ENCODE measurements at regions of chr1 and their contacts with region 1.

Region 1: GRCh38 chr1:39609618-39610331 is 29.7 kb downstream of the HEYL start:
- DNase-seq: peak; percentile 69
- H3K4me3 ChIP-seq: no peak overlapping the region
- H3K27ac ChIP-seq: no peak overlapping the region
- H3K4me1 ChIP-seq: no peaks in the 10 kb centered on the region
- H3K27me3 ChIP-seq: no peaks in the 10 kb centered on the region
- CTCF ChIP-seq: peak; percentile 94

Region 2: GRCh38 chr1:39354572-39354971 is 255.2 kb before region 1 on chr1:
- CTCF ChIA-PET with region 1: no interaction called
- POLR2A ChIA-PET with region 1: no interaction called
- intact Hi-C with region 1: no loop called
- DNase-seq: no peak
- H3K4me3 ChIP-seq: no peak overlapping the region
- H3K27ac ChIP-seq: no peak overlapping the region
- H3K4me1 ChIP-seq: no peaks in the 10 kb centered on the region
- H3K27me3 ChIP-seq: no peaks in the 10 kb centered on the region
- CTCF ChIP-seq: peak; percentile 35; the same call in 1 of the 2 replicates

Region 3: GRCh38 chr1:39391691-39392679 is 217.8 kb before region 1 on chr1:
- CTCF ChIA-PET with region 1: interaction called, 11 read pairs
- POLR2A ChIA-PET with region 1: no interaction called
- intact Hi-C with region 1: no loop called
- DNase-seq: peak; percentile 94
- H3K4me3 ChIP-seq: peak overlapping the region; percentile 6
- H3K27ac ChIP-seq: peak overlapping the region; percentile 85
- H3K4me1 ChIP-seq: peaks cover 60% of the 10 kb centered on the region
- H3K27me3 ChIP-seq: no peaks in the 10 kb centered on the region
- CTCF ChIP-seq: no peak

Region 4: GRCh38 chr1:39540504-39541031 is 69.2 kb before region 1 on chr1:
- CTCF ChIA-PET with region 1: no interaction called
- POLR2A ChIA-PET with region 1: no interaction called
- intact Hi-C with region 1: no loop called
- DNase-seq: no peak
- H3K4me3 ChIP-seq: no peak overlapping the region
- H3K27ac ChIP-seq: no peak overlapping the region
- H3K4me1 ChIP-seq: no peaks in the 10 kb centered on the region
- H3K27me3 ChIP-seq: no peaks in the 10 kb centered on the region
- CTCF ChIP-seq: no peak

Region 5: GRCh38 chr1:39653546-39654031 is 43.8 kb after region 1 on chr1:
- CTCF ChIA-PET with region 1: interaction called, 41 read pairs
- POLR2A ChIA-PET with region 1: no interaction called
- intact Hi-C with region 1: loop called (anchors 1 kb)
- DNase-seq: peak; percentile 83
- H3K4me3 ChIP-seq: no peak overlapping the region
- H3K27ac ChIP-seq: no peak overlapping the region
- H3K4me1 ChIP-seq: no peaks in the 10 kb centered on the region
- H3K27me3 ChIP-seq: no peaks in the 10 kb centered on the region
- CTCF ChIP-seq: peak; percentile 90

Region 6: DNA sequence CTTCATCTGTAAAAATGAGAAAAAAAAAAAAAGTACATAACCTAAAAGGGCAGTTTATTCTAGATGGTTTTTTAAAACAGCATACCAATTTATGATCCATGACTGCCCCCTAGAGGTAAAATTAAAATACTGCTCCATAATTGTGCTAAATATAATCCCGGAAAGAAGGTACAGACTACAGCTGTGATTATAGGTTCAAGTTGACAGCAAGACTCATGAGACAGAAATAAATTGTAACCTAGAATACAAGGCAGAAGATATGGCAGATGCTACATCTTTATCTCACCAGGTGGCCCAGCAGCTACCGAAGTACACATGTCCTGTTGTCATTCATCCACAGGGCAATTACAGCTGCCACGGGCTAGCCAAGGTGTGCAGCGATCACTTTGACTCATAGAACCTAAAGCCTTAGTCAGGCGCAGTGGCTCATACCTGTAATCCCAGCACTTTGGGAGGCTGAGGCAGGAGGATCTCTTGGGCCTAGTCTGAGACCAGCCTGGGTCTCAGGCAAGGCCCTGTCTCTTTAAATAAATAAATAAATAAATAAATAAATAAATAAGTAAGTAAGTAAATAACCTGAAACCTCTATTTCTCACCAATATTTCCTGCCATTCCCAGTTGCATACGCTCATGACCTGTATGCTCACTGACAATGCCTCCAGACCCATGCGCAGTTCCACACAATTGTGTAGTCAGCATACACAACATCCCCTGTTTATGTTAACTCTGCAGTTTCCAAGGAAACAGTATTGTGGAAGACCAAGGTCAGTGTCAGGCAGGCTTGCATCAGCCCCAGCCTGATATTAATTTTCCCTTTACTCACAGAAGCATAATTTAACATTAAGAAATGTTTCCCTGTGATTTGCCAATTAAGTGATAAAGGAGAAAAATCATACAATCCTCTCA is 110.6 kb after region 1 on chr1:
- CTCF ChIA-PET with region 1: interaction called, 3 read pairs
- POLR2A ChIA-PET with region 1: no interaction called
- intact Hi-C with region 1: loop called (anchors 2 kb)
- DNase-seq: peak; percentile 81
- H3K4me3 ChIP-seq: no peak overlapping the region
- H3K27ac ChIP-seq: no peak overlapping the region
- H3K4me1 ChIP-seq: no peaks in the 10 kb centered on the region
- H3K27me3 ChIP-seq: peaks cover 20% of the 10 kb centered on the region
- CTCF ChIP-seq: peak; percentile 79

Region 7: DNA sequence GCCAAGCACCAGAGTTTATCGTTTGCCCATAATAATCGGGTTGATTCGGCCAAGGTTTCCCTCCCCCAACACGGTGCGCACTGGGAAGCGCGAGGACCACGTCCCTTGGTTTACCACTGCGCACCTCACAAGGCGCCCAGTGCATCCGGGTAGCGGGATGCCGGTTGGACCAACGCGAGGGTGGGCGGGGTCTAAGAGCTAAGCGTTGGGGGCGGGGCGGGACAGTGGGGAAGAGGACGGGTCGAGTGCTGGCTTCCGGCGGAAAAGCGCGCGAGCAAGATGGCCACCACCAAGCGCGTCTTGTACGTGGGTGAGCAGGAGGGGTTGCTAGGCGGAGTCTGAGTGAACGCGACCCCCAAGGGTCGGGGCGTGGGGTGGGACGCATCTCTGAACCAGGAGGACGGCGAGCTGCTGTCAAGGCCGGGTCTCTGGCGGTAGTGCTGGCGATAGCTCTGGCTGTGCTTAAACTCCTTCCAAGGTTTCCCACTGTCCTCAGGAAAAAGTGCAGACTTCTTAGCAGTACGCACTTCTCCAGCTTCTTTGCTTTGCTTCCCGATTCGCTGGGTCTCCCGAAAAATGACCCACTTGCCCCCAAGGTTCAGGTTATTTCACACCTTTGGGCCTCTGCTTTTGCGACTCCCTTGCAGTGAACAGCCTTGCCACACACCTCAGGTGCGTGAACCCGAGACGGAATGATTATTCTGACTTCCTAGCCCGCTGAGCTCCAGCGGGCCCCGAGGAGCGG is 129.0 kb after region 1 on chr1 and contains the start of gene PPIE:
- CTCF ChIA-PET with region 1: interaction called, 7 read pairs
- POLR2A ChIA-PET with region 1: interaction called, 14 read pairs
- intact Hi-C with region 1: no loop called
- DNase-seq: peak; percentile 97
- H3K4me3 ChIP-seq: peak within 1 kb of the TSS; percentile 83
- H3K27ac ChIP-seq: peak within 1 kb of the TSS; percentile 82
- H3K4me1 ChIP-seq: peaks cover 9% of the 10 kb centered on the region
- H3K27me3 ChIP-seq: no peaks in the 10 kb centered on the region
- CTCF ChIP-seq: no peak
- total RNA-seq, gene PPIE: 62.8 and 71.0 TPM in 2 replicates

Region 8: GRCh38 chr1:39799770-39800470 is 190.1 kb after region 1 on chr1:
- CTCF ChIA-PET with region 1: interaction called, 3 read pairs
- POLR2A ChIA-PET with region 1: no interaction called
- intact Hi-C with region 1: loop called (anchors 10 kb)
- DNase-seq: peak; percentile 53
- H3K4me3 ChIP-seq: no peak overlapping the region
- H3K27ac ChIP-seq: no peak overlapping the region
- H3K4me1 ChIP-seq: no peaks in the 10 kb centered on the region
- H3K27me3 ChIP-seq: no peaks in the 10 kb centered on the region
- CTCF ChIP-seq: peak; percentile 80

Region 9: DNA sequence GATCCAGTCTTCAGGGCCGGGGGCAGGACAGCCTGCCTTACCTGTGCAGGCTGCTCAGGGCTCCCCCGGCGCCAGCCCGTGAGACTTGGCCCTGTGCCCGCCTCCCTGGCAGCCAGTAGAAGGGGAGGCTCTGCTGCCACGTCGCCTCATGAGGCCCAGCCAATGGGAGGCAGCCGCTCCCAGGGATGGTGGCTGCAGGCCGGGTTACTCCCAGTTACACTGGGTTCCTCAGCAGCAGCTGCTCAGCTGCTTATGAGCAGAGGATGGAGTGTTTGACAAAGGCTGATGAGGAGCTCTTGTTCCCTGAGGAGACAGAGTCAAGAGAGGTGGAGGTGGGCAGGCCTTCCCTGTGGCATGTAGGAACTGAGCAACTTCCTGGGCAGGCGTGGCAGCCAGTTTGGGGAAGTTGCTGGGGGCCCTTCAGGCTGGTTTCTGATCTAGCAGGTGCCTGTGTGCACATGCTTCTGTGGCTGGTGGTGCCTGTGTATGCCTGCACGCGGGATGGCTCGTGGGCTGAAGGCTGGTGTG is 350.7 kb after region 1 on chr1:
- CTCF ChIA-PET with region 1: interaction called, 11 read pairs
- POLR2A ChIA-PET with region 1: no interaction called
- intact Hi-C with region 1: no loop called
- DNase-seq: no peak
- H3K4me3 ChIP-seq: no peak overlapping the region
- H3K27ac ChIP-seq: peak overlapping the region; percentile 23
- H3K4me1 ChIP-seq: peaks cover 24% of the 10 kb centered on the region
- H3K27me3 ChIP-seq: no peaks in the 10 kb centered on the region
- CTCF ChIP-seq: no peak

Measured in A673 (cell line).